Testis (tissue), 5 donors: ENCODE measurements at regions of chr5 and their contacts with region 1.

Region 1: GRCh38 chr5:112551419-112552032 is 132.4 kb upstream of the EPB41L4A start:
- DNase-seq: peak; percentile 51
- H3K4me3 ChIP-seq: no peak overlapping the region
- H3K27ac ChIP-seq: no peak overlapping the region
- H3K4me1 ChIP-seq: no peaks in the 10 kb centered on the region
- H3K27me3 ChIP-seq: no peaks in the 10 kb centered on the region
- CTCF ChIP-seq: peak; percentile 62 to 74 (median 70)
- POLR2A ChIP-seq: no peak

Region 2: DNA sequence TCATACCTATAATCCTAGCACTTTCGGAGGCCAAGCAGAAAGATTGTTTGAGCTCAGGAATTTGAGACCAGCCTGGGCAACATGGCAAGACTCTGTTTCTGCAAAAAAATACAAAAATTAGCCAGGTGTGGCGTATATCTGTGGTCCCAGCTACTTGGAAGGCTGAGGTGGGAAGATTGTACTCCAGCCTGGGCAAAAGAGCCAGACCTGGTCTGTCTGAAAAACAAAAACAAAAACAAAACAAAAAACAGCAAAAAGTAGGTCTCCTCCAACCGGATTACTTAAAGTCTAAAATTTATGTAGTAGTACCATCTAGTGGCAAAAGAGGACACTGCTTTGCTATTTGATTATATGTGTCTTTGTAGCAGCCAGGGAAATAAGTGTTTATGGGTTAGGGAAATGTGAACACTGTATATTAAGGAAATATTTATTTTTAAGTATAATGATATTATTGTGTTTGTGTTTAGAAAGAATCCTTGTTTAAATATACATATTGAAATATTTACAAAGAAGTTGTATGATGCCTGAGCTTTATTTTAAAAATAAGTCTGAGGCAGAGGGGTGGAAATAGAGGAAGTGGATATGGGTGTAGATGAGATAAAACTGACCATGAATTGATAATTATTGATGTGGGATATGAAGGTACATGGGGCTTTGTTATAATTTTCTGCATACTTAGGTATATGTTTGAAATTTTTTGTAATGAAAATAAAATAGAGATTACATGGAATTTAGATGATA is 206.1 kb after region 1 on chr5:
- intact Hi-C with region 1: loop called (anchors 5 kb)
- DNase-seq: no peak
- H3K4me3 ChIP-seq: no peak overlapping the region
- H3K27ac ChIP-seq: peak overlapping the region in 1 of 2 donors; percentile 38
- H3K4me1 ChIP-seq: no peaks in the 10 kb centered on the region
- H3K27me3 ChIP-seq: no peaks in the 10 kb centered on the region
- CTCF ChIP-seq: peak; percentile 59 to 74 (median 73)
- POLR2A ChIP-seq: no peak